CD4-positive, alpha-beta memory T cell (primary cell): ENCODE measurements at regions of chr14 and their contacts with region 1.

Region 1: DNA sequence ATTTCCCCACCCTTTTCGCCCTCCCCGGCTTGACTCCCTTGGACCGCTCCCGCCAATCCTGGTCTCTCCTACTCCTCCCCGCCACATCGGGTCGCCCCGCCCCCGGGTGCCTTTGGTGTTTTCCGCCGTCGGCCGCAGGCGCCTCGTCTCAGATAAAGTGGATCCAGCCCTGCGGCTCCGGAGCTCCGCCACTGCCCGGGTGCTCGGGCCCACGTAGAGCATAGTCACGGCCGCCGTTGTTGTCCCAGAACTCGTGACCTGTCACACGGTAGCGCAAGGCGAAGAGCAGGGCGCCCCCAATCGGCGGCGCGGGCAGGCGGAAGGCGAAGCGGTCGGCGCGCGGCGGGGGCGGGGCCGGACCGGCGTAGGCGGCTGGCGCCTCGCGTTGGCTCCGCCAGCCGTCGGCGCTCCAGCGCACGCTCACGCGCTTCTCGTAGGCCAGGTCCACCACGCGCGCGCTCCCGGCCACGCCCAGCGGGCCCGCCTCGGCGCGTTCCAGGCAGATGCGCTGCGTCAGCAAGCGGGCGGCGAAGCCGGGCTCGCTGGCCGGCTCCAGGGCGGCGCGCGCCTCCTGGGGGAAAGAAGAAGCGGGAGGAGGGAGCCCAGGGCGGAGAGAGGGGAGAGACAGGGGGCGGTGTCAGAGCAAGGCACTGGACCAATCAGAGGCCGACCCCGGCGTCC is 1.2 kb downstream of the PPP1R3E start:
- DNase-seq: peak; percentile 95 to 99 (median 98)
- H3K4me3 ChIP-seq: peak overlapping the region; percentile 86 to 90
- H3K4me3 Mint-ChIP-seq: peak overlapping the region; percentile 89 to 100 (median 90)
- H3K27ac ChIP-seq: peak overlapping the region; percentile 87
- H3K27ac Mint-ChIP-seq: peak overlapping the region; percentile 92 to 99 (median 96)
- H3K4me1 ChIP-seq: peaks cover 14% of the 10 kb centered on the region
- H3K4me1 Mint-ChIP-seq: peaks cover 14 to 29% (median 23%) of the 10 kb centered on the region in 4 donors
- H3K27me3 ChIP-seq: no peaks in the 10 kb centered on the region
- H3K27me3 Mint-ChIP-seq: peaks cover 8 to 9% of the 10 kb centered on the region in 2 donors

Region 2: DNA sequence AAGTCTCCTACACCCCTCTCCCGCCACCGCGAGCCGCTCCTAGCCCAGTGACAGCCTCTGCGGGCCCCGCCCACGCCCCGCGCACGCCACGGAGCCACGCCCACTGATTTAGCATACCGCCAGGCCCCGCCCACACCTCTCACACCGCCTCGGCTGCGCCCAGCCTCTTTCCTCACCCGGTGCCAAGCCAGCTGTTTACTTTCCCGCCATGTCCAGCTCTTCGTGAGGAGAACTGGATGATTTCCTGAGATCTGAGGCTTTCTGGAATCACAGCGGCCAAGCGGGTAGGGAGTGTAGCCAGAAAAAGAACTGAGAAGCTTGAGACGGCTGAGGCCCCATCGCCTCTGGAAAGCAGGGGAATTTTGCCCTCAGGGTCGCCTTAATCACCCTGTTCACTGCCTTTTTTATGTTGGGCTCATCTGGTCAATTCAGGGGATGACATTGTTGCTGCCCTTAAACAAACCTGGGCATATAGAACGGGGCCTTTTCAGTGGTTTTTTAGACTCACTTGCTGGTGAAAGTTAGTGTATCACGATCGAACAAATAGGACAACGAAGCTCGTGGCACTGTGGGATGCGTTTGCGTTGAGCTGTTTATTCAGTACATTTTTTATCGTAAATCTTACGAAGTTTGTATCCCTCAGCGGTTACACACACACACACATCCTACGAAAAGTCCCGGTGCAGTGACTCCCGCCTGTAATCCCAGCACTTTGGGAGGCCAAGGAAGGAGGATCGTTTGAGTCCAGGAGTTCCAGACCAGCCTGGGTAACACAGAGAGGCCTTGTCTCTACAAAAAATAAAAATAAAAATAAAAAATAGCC is 63.4 kb before region 1 on chr14 and contains the start of gene RNF212B:
- CTCF ChIA-PET with region 1: no interaction called
- POLR2A ChIA-PET with region 1: no interaction called
- intact Hi-C with region 1: no loop called
- DNase-seq: peak; percentile 53 to 67 (median 61)
- H3K4me3 ChIP-seq: peak within 1 kb of the TSS in 1 of 2 donors; percentile 10
- H3K4me3 Mint-ChIP-seq: peak within 1 kb of the TSS in 5 of 8 donors; percentile 11 to 61 (median 46)
- H3K27ac ChIP-seq: no peak within 1 kb of the TSS
- H3K27ac Mint-ChIP-seq: no peak within 1 kb of the TSS
- H3K4me1 ChIP-seq: peaks cover 8% of the 10 kb centered on the region
- H3K4me1 Mint-ChIP-seq: peaks cover 0 to 7% (median 6%) of the 10 kb centered on the region in 4 donors
- H3K27me3 ChIP-seq: no peaks in the 10 kb centered on the region
- H3K27me3 Mint-ChIP-seq: peaks cover 17% of the 10 kb centered on the region in 2 donors
- total RNA-seq, gene RNF212B: not detected

Region 3: GRCh38 chr14:23269193-23269592 is 32.2 kb before region 1 on chr14:
- CTCF ChIA-PET with region 1: interaction called, 6 read pairs
- POLR2A ChIA-PET with region 1: interaction called, 5 read pairs
- intact Hi-C with region 1: loop called (anchors 1 kb)
- DNase-seq: no peak
- H3K4me3 ChIP-seq: no peak overlapping the region
- H3K4me3 Mint-ChIP-seq: no peak overlapping the region
- H3K27ac ChIP-seq: no peak overlapping the region
- H3K27ac Mint-ChIP-seq: no peak overlapping the region
- H3K4me1 ChIP-seq: no peaks in the 10 kb centered on the region
- H3K4me1 Mint-ChIP-seq: no peaks in the 10 kb centered on the region
- H3K27me3 ChIP-seq: no peaks in the 10 kb centered on the region
- H3K27me3 Mint-ChIP-seq: peaks cover 1 to 7% of the 10 kb centered on the region in 2 donors

Region 4: GRCh38 chr14:23286020-23286905 is 15.2 kb before region 1 on chr14 and contains the start of gene HOMEZ:
- CTCF ChIA-PET with region 1: interaction called, 65 read pairs
- POLR2A ChIA-PET with region 1: interaction called, 100 read pairs
- intact Hi-C with region 1: loop called (anchors 1 kb)
- DNase-seq: peak; percentile 94 to 98 (median 95)
- H3K4me3 ChIP-seq: peak within 1 kb of the TSS; percentile 71 to 85
- H3K4me3 Mint-ChIP-seq: peak within 1 kb of the TSS; percentile 95 to 99 (median 98)
- H3K27ac ChIP-seq: peak within 1 kb of the TSS; percentile 75
- H3K27ac Mint-ChIP-seq: peak within 1 kb of the TSS; percentile 90 to 98 (median 96)
- H3K4me1 ChIP-seq: peaks cover 23% of the 10 kb centered on the region
- H3K4me1 Mint-ChIP-seq: peaks cover 13 to 36% (median 24%) of the 10 kb centered on the region in 4 donors
- H3K27me3 ChIP-seq: no peaks in the 10 kb centered on the region
- H3K27me3 Mint-ChIP-seq: no peaks in the 10 kb centered on the region
- total RNA-seq, gene HOMEZ: 21.0 to 21.7 TPM

Region 5: DNA sequence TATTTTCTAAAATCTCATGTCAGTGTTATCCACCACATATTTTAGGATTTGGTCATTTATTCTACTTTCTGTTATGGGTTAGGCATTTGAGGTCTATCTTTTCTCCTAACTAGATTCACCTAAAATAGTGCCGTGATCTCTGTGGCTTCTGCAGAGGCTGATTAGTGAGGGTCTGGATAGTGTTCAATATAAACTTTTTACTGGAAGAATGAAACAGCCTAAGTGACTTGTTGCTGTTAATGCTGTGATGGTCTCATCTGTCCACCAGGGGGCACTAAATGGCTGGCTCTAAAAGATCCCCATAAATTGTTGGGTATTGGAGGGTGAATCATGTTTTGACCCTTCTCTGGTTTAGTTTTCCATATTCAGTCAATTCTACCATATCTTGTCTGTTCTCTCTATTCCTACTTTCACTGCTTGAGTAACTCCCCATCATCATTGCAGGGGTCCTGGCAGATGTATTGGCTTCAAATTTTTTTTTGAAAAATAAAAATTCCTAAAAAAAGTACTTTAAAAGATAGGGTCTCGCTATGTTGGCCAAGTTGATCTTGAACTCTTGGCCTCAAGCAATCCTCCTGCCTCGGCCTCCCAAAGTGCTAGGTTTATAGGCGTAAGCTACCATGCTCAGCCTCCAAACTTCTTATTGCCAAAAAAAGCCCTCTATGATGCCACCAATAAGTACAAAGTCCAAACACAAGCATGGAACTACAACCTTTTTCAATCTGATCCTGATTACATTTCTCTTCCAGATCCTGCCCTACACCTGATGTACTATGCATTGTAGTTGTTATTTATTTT is 26.7 kb after region 1 on chr14:
- CTCF ChIA-PET with region 1: interaction called, 93 read pairs
- POLR2A ChIA-PET with region 1: interaction called, 373 read pairs
- intact Hi-C with region 1: no loop called
- DNase-seq: peak; percentile 48 to 64 (median 60)
- H3K4me3 ChIP-seq: no peak overlapping the region
- H3K4me3 Mint-ChIP-seq: no peak overlapping the region
- H3K27ac ChIP-seq: no peak overlapping the region
- H3K27ac Mint-ChIP-seq: peak overlapping the region in 2 of 7 donors; percentile 28 to 60
- H3K4me1 ChIP-seq: peaks cover 9% of the 10 kb centered on the region
- H3K4me1 Mint-ChIP-seq: peaks cover 3 to 8% (median 5%) of the 10 kb centered on the region in 4 donors
- H3K27me3 ChIP-seq: no peaks in the 10 kb centered on the region
- H3K27me3 Mint-ChIP-seq: peaks cover 0 to 2% of the 10 kb centered on the region in 2 donors

Region 6: GRCh38 chr14:23344442-23344841 is 43.0 kb after region 1 on chr14:
- CTCF ChIA-PET with region 1: no interaction called
- POLR2A ChIA-PET with region 1: no interaction called
- intact Hi-C with region 1: no loop called
- DNase-seq: no peak
- H3K4me3 ChIP-seq: no peak overlapping the region
- H3K4me3 Mint-ChIP-seq: no peak overlapping the region
- H3K27ac ChIP-seq: no peak overlapping the region
- H3K27ac Mint-ChIP-seq: no peak overlapping the region
- H3K4me1 ChIP-seq: no peaks in the 10 kb centered on the region
- H3K4me1 Mint-ChIP-seq: no peaks in the 10 kb centered on the region
- H3K27me3 ChIP-seq: no peaks in the 10 kb centered on the region
- H3K27me3 Mint-ChIP-seq: peaks cover 3 to 7% of the 10 kb centered on the region in 2 donors